Right ventricle myocardium inferior (tissue), 1 donor: ENCODE measurements at regions of chr22 and their contacts with region 1.

Region 1: DNA sequence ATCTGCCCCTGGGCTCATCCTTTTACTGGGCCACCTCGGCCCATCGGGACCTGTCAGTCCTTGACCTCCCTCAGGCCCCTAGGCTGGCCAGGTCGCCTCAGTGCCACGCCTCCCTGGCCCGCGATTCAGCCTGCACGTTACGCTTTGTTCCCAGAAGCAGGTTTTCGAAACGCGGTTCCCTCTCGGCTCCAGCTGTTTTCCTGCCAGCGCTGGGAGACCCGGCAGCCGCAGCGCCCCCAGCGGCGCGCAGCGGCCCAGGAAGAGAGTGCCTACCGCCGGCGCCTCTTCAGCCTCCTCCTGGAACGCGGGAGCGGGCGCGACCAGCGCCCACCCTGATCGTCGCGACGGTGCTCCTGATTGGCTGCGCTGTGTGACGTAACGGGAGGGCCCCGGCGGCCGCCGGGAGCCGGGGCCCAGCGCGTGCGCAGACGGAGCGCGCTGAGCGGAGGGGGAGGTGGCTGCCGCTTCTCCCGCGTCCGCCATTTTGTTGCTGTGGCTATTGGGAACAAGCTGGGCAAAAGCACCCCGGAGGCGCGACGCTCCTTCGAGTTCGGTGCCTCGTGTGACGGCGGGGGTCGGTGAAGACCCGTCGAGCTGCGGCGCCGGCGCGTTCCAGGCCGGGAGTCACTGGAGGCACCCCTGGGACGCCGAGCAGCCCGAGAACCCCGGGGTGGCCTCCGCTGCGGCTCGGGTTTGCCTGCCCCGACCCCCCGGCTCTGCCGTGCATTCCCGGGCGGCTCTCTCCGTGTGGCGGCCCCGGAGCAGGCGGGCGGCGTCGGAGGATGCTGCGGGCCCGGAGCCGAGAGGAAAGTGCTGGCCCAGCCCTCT is at the start of gene CRKL:
- DNase-seq: peak; percentile 98
- ATAC-seq: peak; percentile 100
- total RNA-seq, gene CRKL: 52.6 TPM

Region 2: GRCh38 chr22:20783844-20784723 is 133.1 kb before region 1 on chr22:
- intact Hi-C with region 1: no loop called
- DNase-seq: no peak
- ATAC-seq: no peak

Region 3: GRCh38 chr22:20858615-20859416 is 58.4 kb before region 1 on chr22 and contains the starts of genes PI4KA and SNAP29:
- intact Hi-C with region 1: loop called (anchors 10 kb)
- DNase-seq: peak; percentile 100
- ATAC-seq: peak; percentile 98
- total RNA-seq, gene PI4KA: 46.0 TPM
- total RNA-seq, gene SNAP29: 22.8 TPM

Region 4: DNA sequence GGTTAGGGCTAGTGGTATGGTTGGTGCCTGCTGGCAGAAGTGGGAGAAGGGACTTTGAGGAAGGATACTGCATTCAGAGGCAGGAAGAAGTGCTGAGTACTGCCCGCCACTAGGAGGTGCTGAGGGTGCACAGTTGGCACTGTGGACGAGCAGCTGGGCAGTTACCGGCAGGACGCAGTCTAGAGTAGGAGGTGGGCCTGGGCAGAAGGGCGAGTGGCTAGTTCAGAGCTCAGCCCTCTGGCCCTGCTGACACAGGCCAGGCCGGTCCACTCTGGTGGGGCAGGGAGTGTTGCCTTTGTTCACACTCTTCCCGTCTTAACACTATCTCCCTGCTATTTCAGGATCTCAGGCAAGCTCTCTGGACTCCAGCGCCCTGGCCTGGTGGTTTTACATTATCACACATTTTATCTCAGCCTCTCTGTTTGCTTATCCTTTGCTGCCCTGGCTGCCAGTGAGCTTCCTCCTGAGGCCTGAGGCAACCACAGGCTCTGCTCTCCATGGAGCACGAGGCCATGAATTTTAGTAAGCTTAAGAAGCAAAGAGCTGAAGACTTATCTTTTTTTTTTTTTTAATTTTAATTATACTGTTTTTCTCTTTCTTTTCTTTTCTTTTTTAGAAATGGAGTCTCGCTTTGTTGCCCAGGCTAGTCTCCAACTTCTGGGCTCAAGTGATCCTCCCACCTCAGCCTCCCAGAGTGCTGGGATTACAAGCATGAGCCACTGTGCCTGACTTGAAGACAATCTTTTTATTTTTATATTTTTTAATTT is 31.5 kb before region 1 on chr22:
- intact Hi-C with region 1: loop called (anchors 2 kb)
- DNase-seq: peak; percentile 84
- ATAC-seq: peak; percentile 95

Region 5: DNA sequence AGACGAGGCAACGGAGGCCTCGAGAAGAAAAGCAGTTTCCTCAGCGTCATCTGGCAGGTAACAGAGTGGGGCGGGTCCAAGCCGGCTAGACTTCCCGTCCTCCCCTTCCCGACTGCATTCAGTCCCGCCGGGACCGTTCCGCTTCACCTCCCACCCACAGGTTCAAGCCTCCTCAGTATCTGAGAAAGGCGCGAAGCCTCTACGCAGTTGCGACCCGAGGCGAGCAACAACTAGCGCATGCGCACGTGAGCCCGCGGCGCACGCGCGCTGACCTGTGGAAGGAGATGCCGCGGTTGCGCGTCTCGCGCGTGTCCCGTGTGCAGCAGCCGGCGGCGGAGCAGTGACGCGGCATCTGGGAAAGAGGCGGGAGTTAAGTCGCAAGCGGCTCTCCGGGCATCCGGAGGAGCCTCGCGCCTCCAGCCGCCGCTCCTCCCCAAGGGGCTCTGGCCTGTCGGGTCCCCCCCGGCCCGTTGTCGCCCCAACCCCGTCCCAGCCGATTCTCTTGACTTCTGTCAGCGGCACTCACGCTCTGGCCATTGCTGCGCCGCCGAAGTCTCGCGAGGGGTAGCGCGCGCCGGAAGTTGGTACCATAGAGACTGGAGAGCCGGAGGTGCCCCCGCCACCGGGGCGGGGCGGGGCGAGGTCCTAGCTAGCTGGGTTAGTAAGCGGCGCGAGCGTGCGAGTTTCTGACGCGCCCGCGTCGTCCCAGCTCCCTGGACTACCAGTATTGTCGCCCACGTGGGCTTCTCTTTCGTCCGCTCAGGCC is 84.5 kb after region 1 on chr22 and contains the start of gene THAP7:
- intact Hi-C with region 1: loop called (anchors 10 kb)
- DNase-seq: peak; percentile 98
- ATAC-seq: peak; percentile 97
- total RNA-seq, gene THAP7: 17.0 TPM

Region 6: GRCh38 chr22:21832291-21833290 is 915.4 kb after region 1 on chr22:
- intact Hi-C with region 1: loop called (anchors 5 kb)
- DNase-seq: no peak
- ATAC-seq: peak; percentile 79